CD4-positive, alpha-beta memory T cell (primary cell): ENCODE measurements at regions of chr4 and their contacts with region 1.

Region 1: DNA sequence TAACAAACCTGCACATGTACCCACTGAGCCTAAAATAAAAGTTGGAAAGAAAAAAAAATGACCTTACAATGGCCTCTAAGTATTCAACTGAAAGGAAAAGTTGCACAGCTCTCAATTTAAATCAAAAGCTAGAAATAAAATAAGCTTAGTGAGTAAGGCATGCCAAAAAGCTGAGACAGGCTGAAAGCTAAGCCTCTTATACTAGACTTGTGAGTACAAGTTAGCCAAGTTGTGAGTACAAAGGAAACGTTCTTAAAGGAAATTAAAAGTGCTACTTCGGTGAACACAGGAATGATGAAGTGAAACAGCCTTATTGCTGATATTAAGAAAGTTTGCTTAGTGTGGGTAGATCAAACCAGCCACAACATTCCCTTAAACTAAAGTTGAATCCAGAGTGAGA is 707.9 kb upstream of the PITX2 start:
- DNase-seq: no peak
- H3K4me3 ChIP-seq: no peak overlapping the region
- H3K4me3 Mint-ChIP-seq: no peak overlapping the region
- H3K27ac ChIP-seq: no peak overlapping the region
- H3K27ac Mint-ChIP-seq: no peak overlapping the region
- H3K4me1 ChIP-seq: no peaks in the 10 kb centered on the region
- H3K4me1 Mint-ChIP-seq: no peaks in the 10 kb centered on the region
- H3K27me3 ChIP-seq: no peaks in the 10 kb centered on the region
- H3K27me3 Mint-ChIP-seq: no peaks in the 10 kb centered on the region

Region 2: DNA sequence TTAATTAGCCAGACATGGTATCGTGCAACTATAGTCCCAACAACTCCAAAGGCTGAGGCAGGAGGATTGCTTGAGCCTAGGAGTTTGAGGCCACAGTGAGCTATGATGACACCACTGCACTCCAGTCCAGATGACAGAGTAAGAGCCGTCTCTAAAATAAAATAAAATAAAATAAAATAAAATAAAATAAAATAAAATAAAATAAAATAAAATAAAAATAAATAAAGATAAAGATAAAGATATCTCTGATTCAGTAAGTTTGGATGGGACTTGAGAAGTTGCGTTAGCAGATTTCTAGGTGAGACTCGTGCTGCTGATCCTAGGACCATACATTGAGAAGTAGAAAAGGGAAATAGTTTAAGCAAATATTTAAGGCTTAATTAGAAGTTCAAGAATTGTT is 559.6 kb after region 1 on chr4:
- CTCF ChIA-PET with region 1: no interaction called
- POLR2A ChIA-PET with region 1: no interaction called
- intact Hi-C with region 1: loop called (anchors 10 kb)
- DNase-seq: no peak
- H3K4me3 ChIP-seq: no peak overlapping the region
- H3K4me3 Mint-ChIP-seq: no peak overlapping the region
- H3K27ac ChIP-seq: no peak overlapping the region
- H3K27ac Mint-ChIP-seq: no peak overlapping the region
- H3K4me1 ChIP-seq: no peaks in the 10 kb centered on the region
- H3K4me1 Mint-ChIP-seq: no peaks in the 10 kb centered on the region
- H3K27me3 ChIP-seq: no peaks in the 10 kb centered on the region
- H3K27me3 Mint-ChIP-seq: peaks cover 0 to 2% of the 10 kb centered on the region in 2 donors